ENCODE measurements at regions of chr4 and their contacts with region 1.

Region 1: GRCh38 chr4:108570993-108571569 is 49.3 kb upstream of the RPL34 start:
- DNase-seq: no peak
- ATAC-seq: no peak
- H3K4me3 ChIP-seq: no peak overlapping the region
- H3K4me3 Mint-ChIP-seq: no peak overlapping the region
- H3K27ac ChIP-seq: no peak overlapping the region
- H3K27ac Mint-ChIP-seq: no peak overlapping the region
- H3K4me1 ChIP-seq: no peaks in the 10 kb centered on the region
- H3K4me1 Mint-ChIP-seq: no peaks in the 10 kb centered on the region
- H3K27me3 ChIP-seq: no peaks in the 10 kb centered on the region
- H3K27me3 Mint-ChIP-seq: peaks cover 9% of the 10 kb centered on the region
- CTCF ChIP-seq: no peak

Region 2: GRCh38 chr4:107757864-107758476 is 813.1 kb before region 1 on chr4:
- CTCF ChIA-PET with region 1: interaction called, 11 read pairs
- POLR2A ChIA-PET with region 1: no interaction called
- intact Hi-C with region 1: no loop called
- DNase-seq: peak; percentile 18
- ATAC-seq: no peak
- H3K4me3 ChIP-seq: no peak overlapping the region
- H3K4me3 Mint-ChIP-seq: no peak overlapping the region
- H3K27ac ChIP-seq: no peak overlapping the region
- H3K27ac Mint-ChIP-seq: no peak overlapping the region
- H3K4me1 ChIP-seq: peaks cover 0 to 7% of the 10 kb centered on the region in 2 donors
- H3K4me1 Mint-ChIP-seq: peaks cover 10% of the 10 kb centered on the region
- H3K27me3 ChIP-seq: no peaks in the 10 kb centered on the region
- H3K27me3 Mint-ChIP-seq: peaks cover 4% of the 10 kb centered on the region
- CTCF ChIP-seq: peak; percentile 80

Region 3: DNA sequence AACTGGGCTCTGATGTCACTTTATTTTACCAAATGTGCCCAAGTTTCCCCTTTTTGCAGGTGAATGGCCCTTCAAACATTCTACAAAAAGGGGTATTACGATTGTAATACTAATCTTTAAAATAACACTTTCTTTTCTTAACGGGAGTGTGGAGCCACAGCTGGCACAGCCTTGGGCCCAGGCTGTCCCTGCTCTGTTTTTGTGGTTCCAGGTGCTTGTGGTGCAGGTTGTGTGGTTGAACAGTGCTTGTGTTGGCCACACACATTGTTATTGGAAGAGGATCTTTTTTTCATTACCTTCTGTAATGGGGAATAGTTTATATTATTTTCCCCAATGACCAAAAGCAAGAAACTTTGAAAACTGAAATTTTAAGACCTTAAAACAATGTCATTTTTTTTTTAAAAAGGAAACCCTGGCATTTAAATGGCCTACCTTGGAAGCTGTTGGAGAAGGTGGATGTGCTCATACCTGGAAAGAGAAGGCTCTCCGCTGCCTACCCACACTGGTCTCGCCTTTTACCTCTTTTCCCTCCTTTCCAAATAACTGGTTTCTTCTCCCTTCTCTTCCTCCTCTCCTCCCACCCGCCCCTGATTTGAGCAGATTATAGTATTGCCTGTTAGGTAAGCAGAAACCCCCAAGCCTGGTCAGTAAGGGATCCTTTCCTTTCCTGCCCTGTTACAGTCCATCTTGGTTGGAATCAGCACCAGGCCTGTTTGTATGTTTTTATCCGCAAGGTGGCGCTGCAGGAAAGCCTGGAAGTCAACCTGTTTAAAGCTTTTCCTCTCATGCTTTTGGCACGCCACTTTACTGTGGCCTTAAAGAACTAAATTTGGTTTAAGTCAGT is 552.8 kb before region 1 on chr4:
- CTCF ChIA-PET with region 1: interaction called, 97 read pairs
- POLR2A ChIA-PET with region 1: no interaction called
- intact Hi-C with region 1: no loop called
- DNase-seq: peak; percentile 74
- ATAC-seq: peak; percentile 39
- H3K4me3 ChIP-seq: no peak overlapping the region
- H3K4me3 Mint-ChIP-seq: no peak overlapping the region
- H3K27ac ChIP-seq: no peak overlapping the region
- H3K27ac Mint-ChIP-seq: no peak overlapping the region
- H3K4me1 ChIP-seq: no peaks in the 10 kb centered on the region
- H3K4me1 Mint-ChIP-seq: no peaks in the 10 kb centered on the region
- H3K27me3 ChIP-seq: no peaks in the 10 kb centered on the region
- H3K27me3 Mint-ChIP-seq: no peaks in the 10 kb centered on the region
- CTCF ChIP-seq: peak; percentile 94

Region 4: GRCh38 chr4:108030332-108030731 is 540.7 kb before region 1 on chr4:
- CTCF ChIA-PET with region 1: interaction called, 3 read pairs
- POLR2A ChIA-PET with region 1: no interaction called
- intact Hi-C with region 1: loop called (anchors 5 kb)
- DNase-seq: peak; percentile 18
- ATAC-seq: no peak
- H3K4me3 ChIP-seq: no peak overlapping the region
- H3K4me3 Mint-ChIP-seq: no peak overlapping the region
- H3K27ac ChIP-seq: no peak overlapping the region
- H3K27ac Mint-ChIP-seq: no peak overlapping the region
- H3K4me1 ChIP-seq: no peaks in the 10 kb centered on the region
- H3K4me1 Mint-ChIP-seq: no peaks in the 10 kb centered on the region
- H3K27me3 ChIP-seq: no peaks in the 10 kb centered on the region
- H3K27me3 Mint-ChIP-seq: no peaks in the 10 kb centered on the region
- CTCF ChIP-seq: no peak

Region 5: DNA sequence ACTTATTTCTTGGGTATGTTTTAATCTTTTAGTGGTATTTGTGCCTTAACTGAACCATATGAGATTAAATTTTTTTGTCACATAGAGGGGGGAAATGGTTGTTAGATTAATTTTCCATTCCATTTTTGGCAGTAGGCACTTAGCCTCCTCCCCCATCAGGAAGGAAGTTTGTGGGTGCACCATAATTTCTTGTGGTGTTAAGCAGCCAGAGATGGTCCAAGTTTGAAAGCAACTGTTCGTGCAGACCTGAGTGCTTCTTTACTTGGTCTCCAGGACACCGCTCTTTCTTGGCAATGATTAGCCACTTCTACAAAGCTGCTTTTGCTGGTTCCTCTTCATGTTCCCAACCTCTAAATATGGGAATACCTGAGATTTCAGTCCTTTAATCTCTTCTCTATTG is 43.4 kb before region 1 on chr4:
- CTCF ChIA-PET with region 1: no interaction called
- POLR2A ChIA-PET with region 1: no interaction called
- intact Hi-C with region 1: no loop called
- DNase-seq: no peak
- ATAC-seq: no peak
- H3K4me3 ChIP-seq: no peak overlapping the region
- H3K4me3 Mint-ChIP-seq: no peak overlapping the region
- H3K27ac ChIP-seq: no peak overlapping the region
- H3K27ac Mint-ChIP-seq: no peak overlapping the region
- H3K4me1 ChIP-seq: peaks cover 12 to 13% of the 10 kb centered on the region in 2 donors
- H3K4me1 Mint-ChIP-seq: peaks cover 18% of the 10 kb centered on the region
- H3K27me3 ChIP-seq: peaks cover 0 to 3% (median 0%) of the 10 kb centered on the region in 4 experiments
- H3K27me3 Mint-ChIP-seq: no peaks in the 10 kb centered on the region
- CTCF ChIP-seq: no peak

Region 6: GRCh38 chr4:108560616-108561015 is 10.5 kb before region 1 on chr4:
- CTCF ChIA-PET with region 1: interaction called, 16 read pairs
- POLR2A ChIA-PET with region 1: no interaction called
- intact Hi-C with region 1: no loop called
- DNase-seq: no peak
- ATAC-seq: no peak
- H3K4me3 ChIP-seq: no peak overlapping the region
- H3K4me3 Mint-ChIP-seq: no peak overlapping the region
- H3K27ac ChIP-seq: no peak overlapping the region
- H3K27ac Mint-ChIP-seq: no peak overlapping the region
- H3K4me1 ChIP-seq: peaks cover 12% of the 10 kb centered on the region in 2 donors
- H3K4me1 Mint-ChIP-seq: peaks cover 23% of the 10 kb centered on the region
- H3K27me3 ChIP-seq: no peaks in the 10 kb centered on the region
- H3K27me3 Mint-ChIP-seq: peaks cover 5% of the 10 kb centered on the region
- CTCF ChIP-seq: no peak

Region 7: GRCh38 chr4:108581083-108581482 is 10.0 kb after region 1 on chr4:
- CTCF ChIA-PET with region 1: interaction called, 13 read pairs
- POLR2A ChIA-PET with region 1: no interaction called
- intact Hi-C with region 1: no loop called
- DNase-seq: no peak
- ATAC-seq: no peak
- H3K4me3 ChIP-seq: no peak overlapping the region
- H3K4me3 Mint-ChIP-seq: no peak overlapping the region
- H3K27ac ChIP-seq: no peak overlapping the region
- H3K27ac Mint-ChIP-seq: no peak overlapping the region
- H3K4me1 ChIP-seq: no peaks in the 10 kb centered on the region
- H3K4me1 Mint-ChIP-seq: no peaks in the 10 kb centered on the region
- H3K27me3 ChIP-seq: no peaks in the 10 kb centered on the region
- H3K27me3 Mint-ChIP-seq: no peaks in the 10 kb centered on the region
- CTCF ChIP-seq: no peak